SK-N-SH (cell line): ENCODE measurements at regions of chr14 and their contacts with region 1.

Region 1: GRCh38 chr14:35416108-35416750 is 11.7 kb upstream of the NFKBIA start:
- DNase-seq: no peak
- H3K4me3 ChIP-seq: no peak overlapping the region
- H3K27ac ChIP-seq: no peak overlapping the region
- H3K4me1 ChIP-seq: peaks cover 35% of the 10 kb centered on the region in 2 experiments
- H3K27me3 ChIP-seq: no peaks in the 10 kb centered on the region
- CTCF ChIP-seq: no peak
- EP300 ChIP-seq: no peak
- RAD21 ChIP-seq: no peak

Region 2: DNA sequence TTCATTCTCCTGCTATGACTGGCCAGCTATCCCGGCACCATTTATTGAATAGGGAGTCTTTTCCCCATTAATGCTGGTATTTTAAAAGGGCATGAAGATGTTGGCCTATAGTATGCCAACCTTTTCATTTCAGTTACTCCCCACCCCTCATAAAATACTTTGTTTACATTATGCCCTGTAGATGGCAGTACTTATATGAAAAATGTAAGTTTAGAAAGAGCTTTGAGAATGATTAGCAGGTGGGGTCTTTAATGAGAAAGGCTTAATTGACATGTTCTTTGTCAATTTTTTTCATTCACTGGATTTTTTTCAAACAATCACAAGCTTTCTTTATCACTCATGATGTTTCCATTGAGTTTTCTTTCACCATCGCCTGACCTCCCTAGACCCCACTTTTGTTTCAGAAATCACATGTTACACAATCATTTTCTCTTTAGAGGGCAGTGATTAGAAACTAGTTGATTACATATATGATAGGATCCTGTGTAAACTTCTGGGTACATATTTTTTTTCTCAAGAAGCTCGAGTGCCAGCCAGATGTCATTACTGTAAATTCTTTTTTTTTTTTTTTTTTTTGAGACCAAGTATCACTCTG is 186.6 kb before region 1 on chr14:
- CTCF ChIA-PET with region 1: interaction called, 53 read pairs
- POLR2A ChIA-PET with region 1: no interaction called
- DNase-seq: peak; percentile 46
- H3K4me3 ChIP-seq: no peak overlapping the region
- H3K27ac ChIP-seq: no peak overlapping the region
- H3K4me1 ChIP-seq: no peaks in the 10 kb centered on the region
- H3K27me3 ChIP-seq: no peaks in the 10 kb centered on the region
- CTCF ChIP-seq: peak; percentile 55
- EP300 ChIP-seq: no peak
- RAD21 ChIP-seq: peak; percentile 65

Region 3: GRCh38 chr14:35390577-35391387 is 25.4 kb before region 1 on chr14:
- CTCF ChIA-PET with region 1: no interaction called
- POLR2A ChIA-PET with region 1: no interaction called
- DNase-seq: no peak
- H3K4me3 ChIP-seq: no peak overlapping the region
- H3K27ac ChIP-seq: no peak overlapping the region
- H3K4me1 ChIP-seq: peaks cover 1 to 9% of the 10 kb centered on the region in 2 experiments; a peak in 2 of 4 replicates
- H3K27me3 ChIP-seq: no peaks in the 10 kb centered on the region
- CTCF ChIP-seq: no peak
- EP300 ChIP-seq: no peak
- RAD21 ChIP-seq: no peak

Region 4: DNA sequence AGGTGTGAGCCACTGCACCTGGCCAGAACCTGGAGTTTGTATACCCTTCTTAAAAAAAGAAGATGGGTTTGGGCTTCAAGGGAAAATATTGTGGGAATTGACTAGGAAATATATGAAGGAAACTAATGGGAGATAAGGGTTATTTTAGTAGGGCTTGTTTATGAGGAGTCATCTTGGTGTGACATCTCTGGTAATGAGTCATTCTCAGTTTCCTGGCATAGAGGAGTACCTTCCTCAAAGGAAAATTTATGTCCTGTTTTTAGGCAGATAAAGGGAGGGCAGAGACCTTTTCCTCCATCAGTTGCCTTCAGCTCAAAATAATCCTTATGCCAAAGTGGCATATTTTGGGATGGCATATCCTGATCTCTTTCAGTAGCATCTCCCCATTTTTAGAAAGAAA is 18.9 kb after region 1 on chr14:
- CTCF ChIA-PET with region 1: no interaction called
- POLR2A ChIA-PET with region 1: no interaction called
- DNase-seq: no peak
- H3K4me3 ChIP-seq: no peak overlapping the region
- H3K27ac ChIP-seq: no peak overlapping the region
- H3K4me1 ChIP-seq: no peaks in the 10 kb centered on the region
- H3K27me3 ChIP-seq: no peaks in the 10 kb centered on the region
- CTCF ChIP-seq: no peak
- EP300 ChIP-seq: no peak
- RAD21 ChIP-seq: no peak